Activated naive CD4-positive, alpha-beta T cell treated with anti-CD3 and anti-CD28 coated beads for 36 hours (primary cell): ENCODE measurements at regions of chr7 and their contacts with region 1.

Region 1: GRCh38 chr7:54839538-54840213 is 80.7 kb upstream of the SEC61G start:
- DNase-seq: peak; percentile 6
- H3K4me3 Mint-ChIP-seq: no peak overlapping the region
- H3K27ac Mint-ChIP-seq: no peak overlapping the region
- H3K4me1 Mint-ChIP-seq: no peaks in the 10 kb centered on the region
- H3K27me3 Mint-ChIP-seq: peaks cover 7% of the 10 kb centered on the region

Region 2: GRCh38 chr7:54788664-54789063 is 51.0 kb before region 1 on chr7:
- CTCF ChIA-PET with region 1: interaction called, 3 read pairs
- intact Hi-C with region 1: loop called (anchors 2 kb)
- DNase-seq: peak; percentile 51
- H3K4me3 Mint-ChIP-seq: no peak overlapping the region
- H3K27ac Mint-ChIP-seq: no peak overlapping the region
- H3K4me1 Mint-ChIP-seq: peaks cover 6% of the 10 kb centered on the region
- H3K27me3 Mint-ChIP-seq: peaks cover 33% of the 10 kb centered on the region

Region 3: GRCh38 chr7:54858008-54858692 is 18.5 kb after region 1 on chr7:
- CTCF ChIA-PET with region 1: no interaction called
- intact Hi-C with region 1: no loop called
- DNase-seq: no peak
- H3K4me3 Mint-ChIP-seq: no peak overlapping the region
- H3K27ac Mint-ChIP-seq: no peak overlapping the region
- H3K4me1 Mint-ChIP-seq: no peaks in the 10 kb centered on the region
- H3K27me3 Mint-ChIP-seq: peaks cover 15% of the 10 kb centered on the region